Psoas muscle (tissue), 8 donors: ENCODE measurements at regions of chr3 and their contacts with region 1.

Region 1: DNA sequence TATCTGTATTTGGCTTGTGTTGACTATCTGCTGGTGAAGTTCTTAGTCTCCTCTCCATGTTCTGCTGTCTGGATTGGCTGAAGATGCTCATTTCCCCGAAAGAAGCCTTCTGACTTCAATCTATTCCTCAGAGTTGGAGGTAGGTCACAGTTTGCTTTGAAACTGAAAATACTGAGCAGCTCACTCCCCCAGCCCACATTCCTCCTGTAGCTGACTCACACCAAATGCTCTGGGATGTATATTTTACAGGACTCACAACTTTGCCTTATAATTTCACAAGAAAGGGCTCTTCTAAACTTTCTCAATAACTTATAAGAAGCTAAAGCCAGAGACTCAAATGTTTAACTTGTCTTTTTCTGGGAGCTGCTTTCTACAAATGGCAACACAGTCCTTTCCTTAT is 36.3 kb upstream of the SNX4 start:
- DNase-seq: no peak
- ATAC-seq: no peak
- H3K4me3 ChIP-seq: no peak overlapping the region
- H3K27ac ChIP-seq: no peak overlapping the region
- H3K4me1 ChIP-seq: no peaks in the 10 kb centered on the region
- H3K27me3 ChIP-seq: no peaks in the 10 kb centered on the region
- CTCF ChIP-seq: no peak

Region 2: GRCh38 chr3:125462722-125463299 is 93.5 kb before region 1 on chr3:
- intact Hi-C with region 1: loop called in 1 of 2 experiments (anchors 10 kb)
- DNase-seq: no peak
- ATAC-seq: no peak
- H3K4me3 ChIP-seq: no peak overlapping the region
- H3K27ac ChIP-seq: no peak overlapping the region
- H3K4me1 ChIP-seq: no peaks in the 10 kb centered on the region
- H3K27me3 ChIP-seq: no peaks in the 10 kb centered on the region
- CTCF ChIP-seq: no peak

Region 3: DNA sequence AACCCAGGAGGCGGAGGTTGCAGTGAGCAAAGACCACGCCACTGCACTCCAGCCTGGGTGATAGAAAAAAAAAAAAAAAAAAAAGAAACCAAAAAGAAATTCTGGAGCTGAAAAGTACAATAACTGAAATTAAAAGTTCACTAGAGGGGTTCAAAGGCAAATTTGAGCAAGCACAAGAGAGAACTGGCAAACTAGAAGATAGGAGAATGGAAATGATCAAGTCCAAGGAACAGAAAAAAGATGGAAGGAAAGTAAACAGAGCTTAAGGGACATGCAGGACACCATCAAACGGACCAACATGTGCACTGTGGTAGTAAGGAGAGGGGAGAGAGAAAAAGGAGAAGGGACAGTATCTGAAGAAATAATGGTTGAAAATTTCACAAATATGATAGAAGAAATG is 49.2 kb before region 1 on chr3:
- intact Hi-C with region 1: no loop called
- DNase-seq: no peak
- ATAC-seq: no peak
- H3K4me3 ChIP-seq: no peak overlapping the region
- H3K27ac ChIP-seq: no peak overlapping the region
- H3K4me1 ChIP-seq: no peaks in the 10 kb centered on the region
- H3K27me3 ChIP-seq: no peaks in the 10 kb centered on the region
- CTCF ChIP-seq: no peak